Activated CD4-positive, alpha-beta T cell treated with anti-CD3 and anti-CD28 coated beads for 36 hours (primary cell): ENCODE measurements at regions of chr4 and their contacts with region 1.

Region 1: GRCh38 chr4:76949276-76950051 is at the start of gene SEPTIN11:
- DNase-seq: peak; percentile 86
- ATAC-seq: peak; percentile 72
- H3K4me3 Mint-ChIP-seq: peak within 1 kb of the TSS; percentile 83
- H3K27ac Mint-ChIP-seq: peak within 1 kb of the TSS; percentile 49
- H3K4me1 Mint-ChIP-seq: peaks cover 13% of the 10 kb centered on the region
- H3K27me3 Mint-ChIP-seq: peaks cover 22% of the 10 kb centered on the region
- total RNA-seq, gene SEPTIN11: 15.5 to 34.5 TPM

Region 2: DNA sequence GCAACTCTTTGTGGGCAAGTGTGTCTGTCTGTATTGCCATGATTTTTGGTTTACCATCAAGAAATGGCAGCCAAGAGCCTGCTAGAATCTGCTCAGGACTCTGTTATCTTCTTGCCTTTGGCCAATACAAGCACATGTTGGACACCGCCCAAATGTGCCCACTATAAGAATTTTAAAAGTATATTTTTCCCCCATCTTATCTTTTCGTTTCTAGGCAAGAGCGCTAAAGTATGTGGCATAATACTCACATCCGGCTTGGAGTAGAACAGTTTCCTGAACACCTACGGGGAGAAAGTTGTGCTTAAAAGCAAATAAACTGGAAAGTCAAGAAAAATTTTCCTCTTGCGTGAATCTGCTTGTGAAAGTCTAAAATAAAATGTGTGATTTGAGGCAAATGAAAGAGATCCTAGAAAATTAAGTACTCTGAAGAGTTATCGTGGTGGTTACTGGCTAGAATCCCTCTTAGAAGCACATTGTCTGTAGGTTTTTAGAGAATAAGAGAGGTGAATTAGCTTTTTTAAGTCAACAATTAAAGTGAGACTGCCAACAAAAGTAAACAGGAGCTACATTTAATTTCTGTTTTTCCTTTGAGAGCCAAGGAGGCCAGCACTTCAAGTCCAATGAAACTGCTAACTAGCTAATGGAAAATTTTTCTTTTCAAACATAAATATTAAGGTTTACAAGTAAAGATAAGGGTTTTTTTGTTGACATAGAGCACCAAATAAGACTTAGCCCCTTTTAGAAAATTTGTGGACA is 271.7 kb before region 1 on chr4:
- CTCF ChIA-PET with region 1: no interaction called
- POLR2A ChIA-PET with region 1: no interaction called
- intact Hi-C with region 1: no loop called
- DNase-seq: no peak
- ATAC-seq: no peak
- H3K4me3 Mint-ChIP-seq: no peak overlapping the region
- H3K27ac Mint-ChIP-seq: no peak overlapping the region
- H3K4me1 Mint-ChIP-seq: no peaks in the 10 kb centered on the region
- H3K27me3 Mint-ChIP-seq: peaks cover 10% of the 10 kb centered on the region

Region 3: GRCh38 chr4:76984788-76985211 is 35.3 kb after region 1 on chr4:
- CTCF ChIA-PET with region 1: interaction called, 3 read pairs
- POLR2A ChIA-PET with region 1: no interaction called
- intact Hi-C with region 1: loop called in 1 of 2 experiments (anchors 5 kb)
- DNase-seq: no peak
- ATAC-seq: no peak
- H3K4me3 Mint-ChIP-seq: no peak overlapping the region
- H3K27ac Mint-ChIP-seq: no peak overlapping the region
- H3K4me1 Mint-ChIP-seq: peaks cover 75% of the 10 kb centered on the region
- H3K27me3 Mint-ChIP-seq: no peaks in the 10 kb centered on the region

Region 4: DNA sequence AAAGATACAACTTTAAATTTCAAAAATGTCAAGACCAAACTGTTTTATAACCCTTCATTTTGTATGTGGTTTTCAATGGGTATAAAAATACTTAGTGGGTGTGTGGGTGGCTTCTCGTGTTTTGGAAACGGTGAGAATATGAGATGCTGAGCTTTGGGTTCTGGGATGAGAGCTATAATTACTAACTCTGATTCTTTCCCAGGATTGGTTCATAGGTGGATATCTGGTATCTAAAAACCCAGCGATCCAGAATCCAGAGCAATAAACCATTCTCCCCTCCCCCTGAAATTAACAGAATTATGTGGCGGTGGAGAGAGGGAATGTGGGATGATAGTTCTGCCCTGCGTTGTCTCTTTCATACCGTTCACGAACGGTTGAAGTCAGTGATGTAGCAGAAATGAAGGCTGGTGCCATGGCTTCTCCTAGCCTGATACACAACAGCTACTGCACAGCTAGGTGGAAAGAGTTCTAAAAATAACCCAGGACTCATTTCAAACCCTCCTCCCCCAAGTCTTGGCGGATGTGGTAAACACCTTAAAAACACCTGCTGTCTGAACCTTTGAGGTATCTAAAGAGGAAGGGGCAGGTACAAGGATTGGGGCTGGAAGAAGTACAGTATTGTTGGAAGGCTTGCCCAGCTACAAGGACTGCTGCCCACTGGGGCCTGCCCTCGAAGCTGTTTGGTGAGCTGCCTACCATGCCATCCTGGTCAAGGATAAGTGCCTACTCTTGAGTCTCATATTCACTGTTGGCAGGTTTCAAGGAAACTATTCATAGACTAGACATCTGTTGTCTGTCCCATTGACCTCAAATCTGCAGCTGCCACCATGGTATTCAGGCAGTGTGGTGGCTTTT is 44.5 kb after region 1 on chr4:
- CTCF ChIA-PET with region 1: interaction called, 3 read pairs
- POLR2A ChIA-PET with region 1: no interaction called
- intact Hi-C with region 1: loop called (anchors 5 kb)
- DNase-seq: peak; percentile 70
- ATAC-seq: peak; percentile 80
- H3K4me3 Mint-ChIP-seq: peak overlapping the region; percentile 41
- H3K27ac Mint-ChIP-seq: peak overlapping the region; percentile 55
- H3K4me1 Mint-ChIP-seq: peaks cover 63% of the 10 kb centered on the region
- H3K27me3 Mint-ChIP-seq: peaks cover 7% of the 10 kb centered on the region